ENCODE measurements at regions of chr6 and their contacts with region 1.

Region 1: GRCh38 chr6:137866914-137867684 is at the start of gene TNFAIP3:
- DNase-seq: peak; percentile 97
- ATAC-seq: peak; percentile 78
- H3K4me3 Mint-ChIP-seq: peak within 1 kb of the TSS; percentile 96
- H3K27ac Mint-ChIP-seq: peak within 1 kb of the TSS; percentile 98
- H3K4me1 Mint-ChIP-seq: peaks cover 54% of the 10 kb centered on the region
- H3K27me3 Mint-ChIP-seq: no peaks in the 10 kb centered on the region
- CTCF ChIP-seq: no peak
- total RNA-seq, gene TNFAIP3: 207 and 226 TPM in 2 replicates

Region 2: GRCh38 chr6:137707590-137708360 is 159.3 kb before region 1 on chr6:
- CTCF ChIA-PET with region 1: interaction called, 41 read pairs
- POLR2A ChIA-PET with region 1: interaction called, 42 read pairs
- intact Hi-C with region 1: loop called (anchors 1 kb)
- DNase-seq: peak; percentile 27
- ATAC-seq: peak; percentile 75
- H3K4me3 Mint-ChIP-seq: peak overlapping the region; percentile 57
- H3K27ac Mint-ChIP-seq: peak overlapping the region; percentile 85
- H3K4me1 Mint-ChIP-seq: peaks cover 59% of the 10 kb centered on the region
- H3K27me3 Mint-ChIP-seq: no peaks in the 10 kb centered on the region
- CTCF ChIP-seq: peak; percentile 38

Region 3: DNA sequence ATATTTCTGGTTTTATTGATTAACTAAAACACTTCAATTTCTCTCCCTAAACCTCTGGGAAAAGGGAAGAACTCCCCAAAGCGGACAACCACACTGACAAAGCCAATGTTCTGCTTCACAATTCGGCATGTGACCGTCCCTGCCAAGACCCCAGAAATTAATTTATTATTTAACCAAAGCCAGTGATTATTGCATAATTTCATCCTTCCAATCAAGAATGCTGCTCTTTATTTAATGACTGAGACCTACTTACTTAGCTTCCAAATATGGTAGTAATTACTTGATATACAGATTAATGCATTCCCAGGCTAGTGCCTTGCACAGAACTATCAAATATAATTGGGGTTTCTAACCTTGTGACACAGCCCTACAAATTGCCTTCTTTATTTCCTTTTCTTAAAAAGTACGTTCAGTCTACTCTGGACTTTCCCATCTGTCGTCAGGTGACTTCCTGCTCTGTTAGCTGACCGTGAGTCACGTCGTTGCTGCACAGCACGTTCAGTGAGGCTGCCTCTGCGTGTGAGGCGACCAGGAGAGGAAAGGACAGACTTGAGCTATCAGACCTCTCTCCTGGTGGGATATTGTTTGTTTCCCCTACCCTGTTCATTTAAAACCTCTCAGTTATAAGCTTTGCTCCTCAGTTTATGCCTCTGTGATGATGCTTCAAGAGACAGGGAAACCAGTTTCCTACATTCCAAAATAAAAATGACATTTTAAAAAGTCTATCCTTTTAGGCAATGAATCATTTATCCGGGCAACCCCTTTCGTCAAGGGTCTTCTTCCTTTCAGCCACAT is 55.8 kb before region 1 on chr6:
- CTCF ChIA-PET with region 1: interaction called, 9 read pairs
- POLR2A ChIA-PET with region 1: interaction called, 80 read pairs
- intact Hi-C with region 1: loop called (anchors 1 kb)
- DNase-seq: peak; percentile 53
- ATAC-seq: peak; percentile 99
- H3K4me3 Mint-ChIP-seq: peak overlapping the region; percentile 69
- H3K27ac Mint-ChIP-seq: peak overlapping the region; percentile 95
- H3K4me1 Mint-ChIP-seq: peaks cover 41% of the 10 kb centered on the region
- H3K27me3 Mint-ChIP-seq: no peaks in the 10 kb centered on the region
- CTCF ChIP-seq: no peak

Region 4: GRCh38 chr6:137878486-137879285 is 11.6 kb after region 1 on chr6:
- CTCF ChIA-PET with region 1: interaction called, 5 read pairs
- POLR2A ChIA-PET with region 1: interaction called, 16 read pairs
- intact Hi-C with region 1: no loop called
- DNase-seq: no peak
- ATAC-seq: no peak
- H3K4me3 Mint-ChIP-seq: no peak overlapping the region
- H3K27ac Mint-ChIP-seq: peak overlapping the region; percentile 30
- H3K4me1 Mint-ChIP-seq: peaks cover 50% of the 10 kb centered on the region
- H3K27me3 Mint-ChIP-seq: no peaks in the 10 kb centered on the region
- CTCF ChIP-seq: no peak

Region 5: GRCh38 chr6:137938770-137939379 is 71.8 kb after region 1 on chr6:
- CTCF ChIA-PET with region 1: interaction called, 132 read pairs
- POLR2A ChIA-PET with region 1: interaction called, 60 read pairs
- intact Hi-C with region 1: loop called (anchors 1 kb)
- DNase-seq: no peak
- ATAC-seq: no peak
- H3K4me3 Mint-ChIP-seq: no peak overlapping the region
- H3K27ac Mint-ChIP-seq: no peak overlapping the region
- H3K4me1 Mint-ChIP-seq: peaks cover 18% of the 10 kb centered on the region
- H3K27me3 Mint-ChIP-seq: no peaks in the 10 kb centered on the region
- CTCF ChIP-seq: no peak

Region 6: GRCh38 chr6:138001750-138002349 is 134.8 kb after region 1 on chr6:
- CTCF ChIA-PET with region 1: interaction called, 5 read pairs
- POLR2A ChIA-PET with region 1: no interaction called
- intact Hi-C with region 1: loop called (anchors 1 kb)
- DNase-seq: no peak
- ATAC-seq: peak; percentile 57
- H3K4me3 Mint-ChIP-seq: no peak overlapping the region
- H3K27ac Mint-ChIP-seq: no peak overlapping the region
- H3K4me1 Mint-ChIP-seq: peaks cover 3% of the 10 kb centered on the region
- H3K27me3 Mint-ChIP-seq: peaks cover 5% of the 10 kb centered on the region
- CTCF ChIP-seq: peak; percentile 98

Measured in activated B cell treated with CpG ODN at 0.5 μM for 24 hours (primary cell).